ENCODE measurements at regions of chr5 and their contacts with region 1.

Region 1: DNA sequence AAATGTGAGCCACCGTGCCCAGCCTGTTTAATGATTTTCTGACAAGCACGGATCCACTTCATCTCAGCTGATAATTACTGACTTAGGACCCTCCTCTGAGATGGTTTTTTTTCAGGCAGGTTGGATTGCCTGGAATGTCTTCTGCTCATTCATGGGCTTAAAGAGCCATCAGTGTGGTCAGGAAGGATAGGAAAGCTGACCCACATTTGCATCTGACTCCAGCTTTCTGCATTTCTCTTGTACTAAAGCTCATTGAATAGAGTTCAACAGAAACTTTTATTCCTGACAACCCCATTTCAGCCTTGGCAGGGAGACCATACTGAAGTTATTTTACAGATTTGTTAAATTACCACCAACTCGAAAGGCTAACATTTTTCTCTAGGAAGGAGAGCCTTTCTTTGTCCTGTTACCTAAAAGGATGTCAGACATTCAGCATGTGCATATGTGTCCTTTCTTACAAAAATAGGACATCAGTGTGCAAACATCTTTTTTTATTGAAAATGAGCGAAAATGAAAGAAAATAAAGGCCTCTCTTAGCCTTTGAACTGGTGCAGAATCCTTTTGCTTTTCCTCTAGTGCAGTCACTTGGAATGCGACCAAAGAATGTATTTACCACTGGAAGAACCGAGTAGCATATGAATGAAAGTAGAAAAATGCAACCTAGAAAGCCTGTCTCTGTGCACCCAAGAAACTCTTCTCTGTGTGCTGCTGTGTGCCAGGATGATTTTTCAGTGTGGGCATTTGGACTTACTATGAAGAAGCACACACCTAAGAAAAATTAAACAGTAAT is 26.6 kb downstream of the ADCY2 start:
- DNase-seq: no peak
- H3K4me3 ChIP-seq: peak overlapping the region in 1 of 4 experiments; percentile 14; a peak in 1 of 8 replicates
- H3K27ac ChIP-seq: peak overlapping the region; percentile 5; the same call in 1 of the 2 replicates
- H3K4me1 ChIP-seq: peaks cover 23 to 56% (median 40%) of the 10 kb centered on the region in 4 experiments
- H3K27me3 ChIP-seq: no peaks in the 10 kb centered on the region
- CTCF ChIP-seq: no peak
- EP300 ChIP-seq: no peak
- POLR2A ChIP-seq: no peak
- RAD21 ChIP-seq: no peak

Region 2: GRCh38 chr5:7391814-7392692 is 30.5 kb before region 1 on chr5:
- CTCF ChIA-PET with region 1: interaction called, 13 read pairs
- POLR2A ChIA-PET with region 1: interaction called, 13 read pairs
- DNase-seq: peak in 1 of 2 experiments; percentile 39
- H3K4me3 ChIP-seq: no peak overlapping the region
- H3K27ac ChIP-seq: no peak overlapping the region; the same call in 1 of the 2 replicates
- H3K4me1 ChIP-seq: peaks cover 9 to 19% (median 14%) of the 10 kb centered on the region in 4 experiments
- H3K27me3 ChIP-seq: peaks cover 0 to 4% (median 0%) of the 10 kb centered on the region in 4 experiments; a peak in 1 of 7 replicates
- CTCF ChIP-seq: peak in 2 of 3 experiments; percentile 77 to 79; a peak in 3 of 4 replicates
- EP300 ChIP-seq: no peak
- POLR2A ChIP-seq: no peak
- RAD21 ChIP-seq: peak; percentile 80 to 89

Region 3: GRCh38 chr5:7412409-7412808 is 10.1 kb before region 1 on chr5:
- CTCF ChIA-PET with region 1: no interaction called
- POLR2A ChIA-PET with region 1: interaction called, 13 read pairs
- DNase-seq: no peak
- H3K4me3 ChIP-seq: no peak overlapping the region
- H3K27ac ChIP-seq: no peak overlapping the region
- H3K4me1 ChIP-seq: peaks cover 0 to 9% (median 6%) of the 10 kb centered on the region in 4 experiments; a peak in 6 of 7 replicates
- H3K27me3 ChIP-seq: no peaks in the 10 kb centered on the region
- CTCF ChIP-seq: no peak
- EP300 ChIP-seq: no peak
- POLR2A ChIP-seq: no peak; a peak in 1 of 3 replicates
- RAD21 ChIP-seq: no peak

Region 4: GRCh38 chr5:7436506-7436905 is 14.0 kb after region 1 on chr5:
- CTCF ChIA-PET with region 1: interaction called, 3 read pairs
- POLR2A ChIA-PET with region 1: interaction called, 12 read pairs
- DNase-seq: no peak
- H3K4me3 ChIP-seq: no peak overlapping the region
- H3K27ac ChIP-seq: no peak overlapping the region
- H3K4me1 ChIP-seq: no peaks in the 10 kb centered on the region
- H3K27me3 ChIP-seq: no peaks in the 10 kb centered on the region
- CTCF ChIP-seq: peak in 2 of 3 experiments; percentile 6 to 11; a peak in 2 of 4 replicates
- EP300 ChIP-seq: no peak
- POLR2A ChIP-seq: no peak
- RAD21 ChIP-seq: no peak; a peak in 1 of 4 replicates

Region 5: GRCh38 chr5:7983433-7983832 is 560.9 kb after region 1 on chr5:
- CTCF ChIA-PET with region 1: no interaction called
- POLR2A ChIA-PET with region 1: no interaction called
- DNase-seq: no peak
- H3K4me3 ChIP-seq: no peak overlapping the region
- H3K27ac ChIP-seq: no peak overlapping the region
- H3K4me1 ChIP-seq: no peaks in the 10 kb centered on the region
- H3K27me3 ChIP-seq: no peaks in the 10 kb centered on the region
- CTCF ChIP-seq: no peak
- EP300 ChIP-seq: no peak
- POLR2A ChIP-seq: no peak
- RAD21 ChIP-seq: no peak

Measured in H1 (cell line).